ENCODE measurements at regions of chr6 and their contacts with region 1.

Region 1: GRCh38 chr6:159376516-159377158 is 207.4 kb downstream of the FNDC1 start:
- DNase-seq: no peak
- H3K4me3 ChIP-seq: peak overlapping the region in 1 of 2 donors; percentile 20
- H3K27ac ChIP-seq: peak overlapping the region; percentile 68 to 73
- H3K4me1 ChIP-seq: peaks cover 5 to 41% of the 10 kb centered on the region in 2 donors
- H3K27me3 ChIP-seq: no peaks in the 10 kb centered on the region
- CTCF ChIP-seq: no peak

Region 2: GRCh38 chr6:159203304-159204005 is 173.2 kb before region 1 on chr6:
- intact Hi-C with region 1: loop called (anchors 5 kb)
- DNase-seq: peak; percentile 25 to 87
- H3K4me3 ChIP-seq: no peak overlapping the region
- H3K27ac ChIP-seq: peak overlapping the region; percentile 80 to 83
- H3K4me1 ChIP-seq: peaks cover 3 to 8% of the 10 kb centered on the region in 2 donors
- H3K27me3 ChIP-seq: no peaks in the 10 kb centered on the region
- CTCF ChIP-seq: no peak

Region 3: DNA sequence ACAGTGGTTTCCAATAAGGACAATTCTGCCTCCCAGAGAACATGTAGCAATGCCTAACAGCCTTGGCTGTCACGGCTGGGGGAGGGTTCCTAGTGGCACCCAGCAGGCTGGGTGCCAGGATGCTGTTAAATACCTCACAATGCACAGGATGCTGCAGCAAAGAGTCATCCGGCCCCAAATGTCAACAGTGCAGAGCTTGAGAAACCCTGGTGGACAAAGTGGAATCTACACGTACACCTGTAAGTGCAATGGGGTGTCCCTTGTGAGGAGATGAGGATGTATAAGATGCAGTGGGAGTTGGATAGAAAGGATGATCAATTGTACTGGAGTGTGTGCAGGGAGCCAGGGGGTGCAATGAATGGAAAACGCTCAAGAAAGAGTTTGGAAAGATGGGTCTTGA is 65.0 kb before region 1 on chr6:
- intact Hi-C with region 1: loop called (anchors 5 kb)
- DNase-seq: peak in 1 of 2 donors; percentile 77
- H3K4me3 ChIP-seq: no peak overlapping the region
- H3K27ac ChIP-seq: peak overlapping the region; percentile 10 to 34
- H3K4me1 ChIP-seq: peaks cover 0 to 28% of the 10 kb centered on the region in 2 donors
- H3K27me3 ChIP-seq: no peaks in the 10 kb centered on the region
- CTCF ChIP-seq: peak in 1 of 3 experiments; percentile 27

Region 4: GRCh38 chr6:159427771-159428170 is 51.1 kb after region 1 on chr6:
- intact Hi-C with region 1: no loop called
- DNase-seq: no peak
- H3K4me3 ChIP-seq: no peak overlapping the region
- H3K27ac ChIP-seq: no peak overlapping the region
- H3K4me1 ChIP-seq: no peaks in the 10 kb centered on the region
- H3K27me3 ChIP-seq: no peaks in the 10 kb centered on the region
- CTCF ChIP-seq: no peak

Measured in ascending aorta (tissue), 2 donors.